ENCODE measurements at regions of chr1 and their contacts with region 1.

Region 1: GRCh38 chr1:110766025-110766647 is 91.4 kb upstream of the KCNA3 start:
- DNase-seq: peak; percentile 63
- H3K4me3 ChIP-seq: peak overlapping the region in 1 of 2 experiments; percentile 46; a peak in 1 of 4 replicates
- H3K27ac ChIP-seq: no peak overlapping the region
- H3K4me1 ChIP-seq: no peaks in the 10 kb centered on the region; a peak in 1 of 4 replicates
- H3K27me3 ChIP-seq: no peaks in the 10 kb centered on the region
- CTCF ChIP-seq: peak; percentile 91
- EP300 ChIP-seq: no peak
- RAD21 ChIP-seq: peak; percentile 94

Region 2: GRCh38 chr1:110524311-110525251 is 241.6 kb before region 1 on chr1:
- CTCF ChIA-PET with region 1: interaction called, 19 read pairs
- POLR2A ChIA-PET with region 1: no interaction called
- DNase-seq: peak; percentile 80
- H3K4me3 ChIP-seq: no peak overlapping the region; a peak in 1 of 4 replicates
- H3K27ac ChIP-seq: no peak overlapping the region
- H3K4me1 ChIP-seq: no peaks in the 10 kb centered on the region; a peak in 1 of 4 replicates
- H3K27me3 ChIP-seq: no peaks in the 10 kb centered on the region; the same call in 1 of the 2 replicates
- CTCF ChIP-seq: peak; percentile 65
- EP300 ChIP-seq: no peak
- RAD21 ChIP-seq: peak; percentile 90

Region 3: GRCh38 chr1:110619412-110620249 is 146.5 kb before region 1 on chr1:
- CTCF ChIA-PET with region 1: interaction called, 57 read pairs
- POLR2A ChIA-PET with region 1: no interaction called
- DNase-seq: peak; percentile 88
- H3K4me3 ChIP-seq: peak overlapping the region in 1 of 2 experiments; percentile 25; a peak in 1 of 4 replicates
- H3K27ac ChIP-seq: no peak overlapping the region
- H3K4me1 ChIP-seq: peaks cover 0 to 3% of the 10 kb centered on the region in 2 experiments; a peak in 1 of 4 replicates
- H3K27me3 ChIP-seq: peaks cover 11% of the 10 kb centered on the region
- CTCF ChIP-seq: peak; percentile 92
- EP300 ChIP-seq: no peak
- RAD21 ChIP-seq: peak; percentile 73

Region 4: GRCh38 chr1:110645821-110646735 is 120.1 kb before region 1 on chr1:
- CTCF ChIA-PET with region 1: interaction called, 33 read pairs
- POLR2A ChIA-PET with region 1: no interaction called
- DNase-seq: no peak
- H3K4me3 ChIP-seq: no peak overlapping the region
- H3K27ac ChIP-seq: no peak overlapping the region
- H3K4me1 ChIP-seq: peaks cover 0 to 23% of the 10 kb centered on the region in 2 experiments; a peak in 1 of 4 replicates
- H3K27me3 ChIP-seq: no peaks in the 10 kb centered on the region
- CTCF ChIP-seq: no peak
- EP300 ChIP-seq: no peak
- RAD21 ChIP-seq: no peak

Region 5: GRCh38 chr1:110674337-110675059 is 91.6 kb before region 1 on chr1 and contains the start of gene KCNA3:
- CTCF ChIA-PET with region 1: interaction called, 50 read pairs
- POLR2A ChIA-PET with region 1: interaction called, 3 read pairs
- DNase-seq: peak; percentile 89
- H3K4me3 ChIP-seq: peak within 1 kb of the TSS; percentile 32 to 43; a peak in 2 of 4 replicates
- H3K27ac ChIP-seq: peak within 1 kb of the TSS in 1 of 2 experiments; percentile 47; a peak in 1 of 4 replicates
- H3K4me1 ChIP-seq: peaks cover 0 to 8% of the 10 kb centered on the region in 2 experiments; a peak in 2 of 4 replicates
- H3K27me3 ChIP-seq: peaks cover 56% of the 10 kb centered on the region
- CTCF ChIP-seq: no peak
- EP300 ChIP-seq: no peak
- RAD21 ChIP-seq: no peak
- polyA plus RNA-seq, gene KCNA3: 0.02 TPM in 1 of 2 replicates, not detected in the other

Region 6: GRCh38 chr1:110749960-110750359 is 16.2 kb before region 1 on chr1:
- CTCF ChIA-PET with region 1: interaction called, 22 read pairs
- POLR2A ChIA-PET with region 1: no interaction called
- DNase-seq: no peak
- H3K4me3 ChIP-seq: no peak overlapping the region
- H3K27ac ChIP-seq: no peak overlapping the region
- H3K4me1 ChIP-seq: no peaks in the 10 kb centered on the region
- H3K27me3 ChIP-seq: no peaks in the 10 kb centered on the region
- CTCF ChIP-seq: no peak
- EP300 ChIP-seq: no peak
- RAD21 ChIP-seq: no peak

Region 7: DNA sequence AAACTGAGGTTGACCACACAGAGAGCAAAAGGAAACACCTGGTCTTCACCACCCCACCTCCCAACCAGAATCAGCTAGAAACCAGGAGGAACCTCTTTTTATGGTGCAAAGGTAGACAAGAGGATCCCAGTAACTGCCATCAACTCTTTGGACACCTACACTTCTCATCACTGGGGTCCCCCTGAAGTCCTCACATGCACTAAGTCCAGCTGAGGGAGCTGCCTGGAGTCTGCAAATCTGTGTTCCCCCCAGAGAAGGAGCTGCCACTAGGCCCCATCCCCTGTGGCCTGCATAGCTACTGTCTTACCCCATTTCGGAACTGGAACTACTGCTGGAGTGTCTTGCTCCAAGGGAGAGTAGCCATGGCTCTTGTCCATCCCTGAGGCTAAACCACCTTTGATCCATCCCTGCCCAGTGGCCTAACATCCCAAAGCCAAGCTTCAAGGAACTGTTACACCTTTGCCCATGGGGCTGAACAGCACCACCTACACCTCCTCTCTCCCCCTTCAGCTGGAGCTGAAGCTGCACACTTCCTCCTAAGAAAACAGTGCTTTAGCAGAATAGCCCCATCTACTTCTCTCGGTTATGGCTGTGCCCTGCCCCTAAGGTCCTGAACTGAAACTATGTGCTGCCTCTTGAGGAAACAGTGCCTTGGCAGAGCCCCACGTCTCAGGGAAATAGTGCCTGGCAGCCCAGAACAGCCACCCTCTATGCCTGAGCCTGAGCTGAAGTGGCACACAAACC is 21.4 kb after region 1 on chr1:
- CTCF ChIA-PET with region 1: interaction called, 201 read pairs
- POLR2A ChIA-PET with region 1: no interaction called
- DNase-seq: no peak
- H3K4me3 ChIP-seq: no peak overlapping the region
- H3K27ac ChIP-seq: no peak overlapping the region
- H3K4me1 ChIP-seq: no peaks in the 10 kb centered on the region
- H3K27me3 ChIP-seq: no peaks in the 10 kb centered on the region
- CTCF ChIP-seq: no peak
- EP300 ChIP-seq: no peak
- RAD21 ChIP-seq: no peak

Region 8: DNA sequence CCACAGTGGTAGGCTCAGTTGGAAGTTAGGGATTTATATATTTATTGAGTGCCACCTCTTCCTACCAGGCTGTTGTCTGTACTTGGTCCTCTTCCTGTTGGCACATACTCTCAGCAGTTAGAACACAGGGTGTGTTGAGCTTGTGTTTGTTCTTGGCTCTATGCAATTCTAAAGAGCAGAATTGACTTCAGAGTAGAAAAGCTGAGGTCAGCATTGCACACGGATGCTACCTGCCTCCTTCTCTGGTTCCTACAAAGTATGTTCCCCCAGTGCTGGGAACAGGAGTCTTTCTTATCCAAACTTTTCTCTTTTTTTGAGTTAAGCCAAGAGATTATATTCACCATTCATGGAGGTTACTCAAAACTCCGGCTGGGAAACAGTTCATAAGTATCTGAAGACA is 90.3 kb after region 1 on chr1:
- CTCF ChIA-PET with region 1: no interaction called
- POLR2A ChIA-PET with region 1: no interaction called
- DNase-seq: no peak
- H3K4me3 ChIP-seq: no peak overlapping the region
- H3K27ac ChIP-seq: no peak overlapping the region
- H3K4me1 ChIP-seq: no peaks in the 10 kb centered on the region
- H3K27me3 ChIP-seq: no peaks in the 10 kb centered on the region; the same call in 1 of the 2 replicates
- CTCF ChIP-seq: no peak
- EP300 ChIP-seq: no peak
- RAD21 ChIP-seq: no peak

Region 9: DNA sequence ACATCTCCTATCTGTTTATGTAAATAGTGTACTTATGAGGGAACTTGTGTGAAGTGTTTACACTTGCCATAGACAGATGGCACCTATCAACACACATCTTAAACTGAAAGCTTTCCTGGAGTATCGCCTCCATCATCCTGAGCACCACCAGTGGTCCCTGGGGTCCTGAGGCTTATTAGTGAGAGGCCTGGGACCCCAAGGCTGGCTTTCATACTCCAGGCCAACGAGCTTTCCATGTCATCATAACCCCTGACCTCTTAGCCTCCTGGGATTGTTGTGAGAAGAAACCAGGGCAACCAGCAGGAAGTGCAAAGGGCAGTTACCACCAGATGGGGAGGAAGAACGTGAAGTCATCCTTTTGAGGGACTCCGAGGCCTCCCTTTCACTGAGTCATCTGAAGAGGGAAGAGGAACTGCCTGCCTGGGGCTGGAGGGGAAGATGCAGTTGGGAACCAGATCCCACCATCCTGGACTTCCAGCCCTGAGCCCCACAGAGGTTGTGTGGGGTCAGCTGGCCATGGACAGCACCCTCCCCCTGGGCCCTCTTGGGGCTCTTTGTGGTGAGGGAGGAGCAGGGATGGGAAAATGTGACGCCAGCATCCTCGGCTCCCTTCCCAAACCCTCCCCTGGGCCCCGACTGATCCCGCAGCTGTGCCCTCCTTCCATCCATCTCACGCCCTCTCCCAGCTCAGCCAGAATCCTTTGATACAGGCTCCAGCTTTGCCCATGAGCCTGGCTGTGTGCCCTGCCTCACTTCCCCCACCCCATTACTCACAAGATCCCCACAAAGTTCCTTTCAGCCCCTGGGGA is 967.3 kb after region 1 on chr1:
- CTCF ChIA-PET with region 1: no interaction called
- POLR2A ChIA-PET with region 1: no interaction called
- DNase-seq: no peak
- H3K4me3 ChIP-seq: no peak overlapping the region
- H3K27ac ChIP-seq: no peak overlapping the region
- H3K4me1 ChIP-seq: peaks cover 8 to 15% of the 10 kb centered on the region in 2 experiments; a peak in 3 of 4 replicates
- H3K27me3 ChIP-seq: no peaks in the 10 kb centered on the region
- CTCF ChIP-seq: no peak
- EP300 ChIP-seq: no peak
- RAD21 ChIP-seq: no peak